PC-9 (cell line): ENCODE measurements at regions of chr22 and their contacts with region 1.

Region 1: DNA sequence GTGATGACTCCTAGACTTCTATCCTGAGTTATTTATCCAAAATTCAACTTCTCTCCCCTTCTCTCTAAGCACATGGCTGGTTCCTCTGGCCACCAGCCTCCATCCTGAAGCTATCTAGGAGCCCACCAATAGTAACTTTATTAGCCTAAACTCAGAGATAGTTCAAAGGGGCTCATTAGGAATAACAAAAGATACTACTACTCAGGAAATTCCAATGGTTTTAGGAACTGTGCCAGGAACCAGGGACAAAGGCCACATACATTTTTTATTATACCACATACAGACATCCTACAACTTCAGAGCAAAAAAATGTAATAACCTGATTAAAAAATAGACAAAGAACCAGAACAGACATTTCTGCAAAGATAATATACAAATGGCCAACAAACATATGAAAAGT is 27.9 kb downstream of the SLC25A17 start:
- DNase-seq: no peak
- H3K4me3 ChIP-seq: no peak overlapping the region
- H3K27ac ChIP-seq: no peak overlapping the region
- H3K4me1 ChIP-seq: no peaks in the 10 kb centered on the region
- H3K27me3 ChIP-seq: no peaks in the 10 kb centered on the region
- CTCF ChIP-seq: no peak

Region 2: GRCh38 chr22:39960791-39961746 is 830.2 kb before region 1 on chr22:
- CTCF ChIA-PET with region 1: no interaction called
- POLR2A ChIA-PET with region 1: no interaction called
- intact Hi-C with region 1: no loop called
- DNase-seq: no peak
- H3K4me3 ChIP-seq: no peak overlapping the region
- H3K27ac ChIP-seq: no peak overlapping the region
- H3K4me1 ChIP-seq: no peaks in the 10 kb centered on the region
- H3K27me3 ChIP-seq: peaks cover 42% of the 10 kb centered on the region
- CTCF ChIP-seq: no peak

Region 3: DNA sequence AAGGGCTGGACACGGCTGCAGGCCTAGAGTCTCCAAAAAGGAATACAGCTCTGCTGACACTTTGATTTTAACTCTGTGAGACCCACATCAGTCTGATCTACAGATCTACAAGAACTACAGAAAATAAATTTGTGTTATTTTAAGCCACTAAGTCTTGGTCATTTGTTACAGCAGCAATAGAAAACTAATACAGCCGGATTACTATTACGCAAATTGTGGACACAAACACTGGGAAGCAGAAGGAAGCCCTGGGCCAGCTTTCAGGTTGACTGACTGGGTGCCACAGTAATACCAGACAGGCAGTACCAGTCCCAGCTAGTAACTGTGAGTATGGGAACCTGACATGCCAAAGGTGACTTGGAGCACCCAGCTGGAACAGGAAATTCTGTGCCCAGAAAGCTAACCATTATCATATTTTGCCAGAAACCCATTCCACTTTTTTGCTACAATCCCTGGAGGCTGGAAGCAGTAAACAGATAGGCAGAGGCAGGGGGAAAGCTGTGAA is 14.5 kb after region 1 on chr22:
- CTCF ChIA-PET with region 1: interaction called, 12 read pairs
- POLR2A ChIA-PET with region 1: no interaction called
- intact Hi-C with region 1: no loop called
- DNase-seq: no peak
- H3K4me3 ChIP-seq: no peak overlapping the region
- H3K27ac ChIP-seq: no peak overlapping the region
- H3K4me1 ChIP-seq: no peaks in the 10 kb centered on the region
- H3K27me3 ChIP-seq: no peaks in the 10 kb centered on the region
- CTCF ChIP-seq: no peak